RWPE1 (cell line): ENCODE measurements at regions of chr16 and their contacts with region 1.

Region 1: DNA sequence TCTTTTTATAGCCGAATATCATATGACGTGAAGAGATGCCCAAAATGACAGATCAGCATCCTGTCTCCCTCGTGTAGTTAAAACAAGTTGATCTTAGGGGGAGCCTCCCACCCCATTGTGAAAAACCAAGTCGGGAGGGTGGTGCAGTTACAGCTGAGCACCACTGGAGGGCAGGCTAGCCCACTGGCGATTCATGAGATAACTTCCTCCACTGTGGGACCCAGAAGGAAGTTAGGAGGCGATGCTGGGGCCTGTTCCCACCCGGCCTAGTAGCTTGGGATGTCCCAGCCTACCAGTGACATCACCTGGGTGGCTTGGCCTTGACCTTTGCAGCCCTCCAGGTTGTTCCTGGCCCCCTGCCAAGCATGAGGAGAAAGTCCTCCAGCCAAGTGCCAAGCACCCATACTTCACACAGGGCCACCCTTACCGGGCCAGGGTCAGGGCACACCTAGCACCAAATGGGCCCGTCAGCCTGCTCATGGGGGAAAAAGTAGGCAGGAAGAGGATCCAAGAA is 8.1 kb upstream of the CPNE2 start:
- DNase-seq: peak; percentile 84
- H3K27ac ChIP-seq: peak overlapping the region; percentile 31; the same call in 1 of the 2 replicates
- CTCF ChIP-seq: peak; percentile 97

Region 2: DNA sequence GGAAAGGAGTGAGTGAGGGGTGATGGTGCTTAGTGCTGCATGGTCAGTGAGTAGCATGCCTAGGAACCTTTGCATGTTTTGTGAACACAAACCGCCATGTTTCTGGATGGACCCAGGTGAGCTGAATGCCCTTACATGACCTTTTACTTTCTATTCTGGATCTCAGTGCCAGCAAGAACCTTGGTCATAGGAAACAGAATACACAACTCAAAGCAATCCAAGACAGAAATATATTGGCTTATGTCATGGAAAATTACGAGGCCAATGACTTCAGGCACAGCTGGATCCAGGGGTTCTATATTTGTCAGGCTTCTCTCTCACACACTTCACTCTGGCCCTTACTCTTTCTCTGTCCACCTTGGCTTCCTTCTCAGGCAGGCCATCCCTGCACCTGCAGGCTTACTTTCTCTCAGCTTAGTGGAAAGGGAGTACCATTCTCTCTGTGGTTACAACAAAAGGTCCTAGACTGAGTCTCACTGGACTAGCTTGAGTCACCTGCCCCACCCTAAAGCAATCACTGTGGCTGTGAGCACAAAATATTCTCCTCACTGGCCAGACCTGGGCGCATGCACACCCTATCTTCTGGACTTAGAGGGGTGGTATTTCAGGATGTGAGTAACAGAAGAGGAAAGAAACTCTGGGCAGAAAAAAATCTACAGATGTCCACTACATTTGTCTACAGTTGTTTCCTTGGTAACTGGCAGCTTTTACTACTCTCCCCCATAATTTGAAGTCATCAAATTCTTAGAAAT is 12.3 kb before region 1 on chr16:
- CTCF ChIA-PET with region 1: interaction called, 12 read pairs
- POLR2A ChIA-PET with region 1: no interaction called
- DNase-seq: peak; percentile 70
- H3K27ac ChIP-seq: peak overlapping the region; percentile 62
- CTCF ChIP-seq: no peak